ENCODE measurements at regions of chr18 and their contacts with region 1.

Region 1: GRCh38 chr18:36809590-36810381 is 19.0 kb downstream of the TPGS2 start:
- DNase-seq: no peak
- H3K4me3 ChIP-seq: no peak overlapping the region
- H3K27ac ChIP-seq: no peak overlapping the region
- H3K27me3 ChIP-seq: no peaks in the 10 kb centered on the region
- CTCF ChIP-seq: peak; percentile 82

Region 2: DNA sequence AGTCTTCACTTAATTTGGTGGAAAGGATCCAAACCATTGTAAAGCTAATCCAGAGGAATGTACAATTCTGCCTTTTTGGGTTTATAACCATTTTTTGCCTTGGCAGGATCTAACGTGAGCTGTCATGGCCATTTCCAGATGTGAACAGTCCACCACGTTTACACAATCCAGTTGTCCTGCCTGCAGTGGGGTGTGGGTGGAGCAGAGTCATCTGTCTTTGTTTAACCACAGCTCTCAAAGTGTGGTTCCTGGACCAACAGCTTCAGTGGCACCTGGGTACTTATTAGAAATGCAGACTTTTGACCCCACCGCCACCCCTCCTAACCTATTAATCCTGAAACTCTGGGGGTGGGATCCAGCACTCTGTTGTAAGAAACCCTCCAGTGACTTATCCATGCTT is 476.4 kb before region 1 on chr18:
- CTCF ChIA-PET with region 1: interaction called, 11 read pairs
- POLR2A ChIA-PET with region 1: no interaction called
- DNase-seq: peak; percentile 59
- H3K4me3 ChIP-seq: no peak overlapping the region
- H3K27ac ChIP-seq: peak overlapping the region; percentile 21
- H3K27me3 ChIP-seq: peaks cover 3% of the 10 kb centered on the region
- CTCF ChIP-seq: no peak